ENCODE measurements at regions of chr6 and their contacts with region 1.

Region 1: GRCh38 chr6:45571159-45571558 is 193.4 kb upstream of the SUPT3H start:
- DNase-seq: peak; percentile 26
- H3K4me3 Mint-ChIP-seq: no peak overlapping the region
- H3K27ac Mint-ChIP-seq: peak overlapping the region; percentile 34
- H3K4me1 Mint-ChIP-seq: peaks cover 29% of the 10 kb centered on the region
- H3K27me3 Mint-ChIP-seq: no peaks in the 10 kb centered on the region

Region 2: GRCh38 chr6:45445749-45446549 is 125.2 kb before region 1 on chr6:
- CTCF ChIA-PET with region 1: no interaction called
- POLR2A ChIA-PET with region 1: no interaction called
- intact Hi-C with region 1: no loop called
- DNase-seq: peak; percentile 72
- H3K4me3 Mint-ChIP-seq: peak overlapping the region; percentile 34
- H3K27ac Mint-ChIP-seq: peak overlapping the region; percentile 88
- H3K4me1 Mint-ChIP-seq: peaks cover 92% of the 10 kb centered on the region
- H3K27me3 Mint-ChIP-seq: no peaks in the 10 kb centered on the region

Region 3: GRCh38 chr6:45532721-45533210 is 38.4 kb before region 1 on chr6:
- CTCF ChIA-PET with region 1: no interaction called
- POLR2A ChIA-PET with region 1: no interaction called
- intact Hi-C with region 1: no loop called
- DNase-seq: no peak
- H3K4me3 Mint-ChIP-seq: no peak overlapping the region
- H3K27ac Mint-ChIP-seq: no peak overlapping the region
- H3K4me1 Mint-ChIP-seq: peaks cover 3% of the 10 kb centered on the region
- H3K27me3 Mint-ChIP-seq: no peaks in the 10 kb centered on the region

Region 4: GRCh38 chr6:45584127-45584526 is 13.0 kb after region 1 on chr6:
- CTCF ChIA-PET with region 1: interaction called, 10 read pairs
- POLR2A ChIA-PET with region 1: interaction called, 3 read pairs
- intact Hi-C with region 1: no loop called
- DNase-seq: peak; percentile 66
- H3K4me3 Mint-ChIP-seq: no peak overlapping the region
- H3K27ac Mint-ChIP-seq: peak overlapping the region; percentile 73
- H3K4me1 Mint-ChIP-seq: peaks cover 52% of the 10 kb centered on the region
- H3K27me3 Mint-ChIP-seq: no peaks in the 10 kb centered on the region

Measured in activated CD4-positive, alpha-beta memory T cell treated with anti-CD3 and anti-CD28 coated beads for 36 hours (primary cell).